Activated CD4-positive, alpha-beta T cell treated with anti-CD3 and anti-CD28 coated beads, Interleukin-2, amount 10 ng/mL, durations not matched to agents 7 days and 5 days (primary cell): ENCODE measurements at regions of chr17 and their contacts with region 1.

Region 1: DNA sequence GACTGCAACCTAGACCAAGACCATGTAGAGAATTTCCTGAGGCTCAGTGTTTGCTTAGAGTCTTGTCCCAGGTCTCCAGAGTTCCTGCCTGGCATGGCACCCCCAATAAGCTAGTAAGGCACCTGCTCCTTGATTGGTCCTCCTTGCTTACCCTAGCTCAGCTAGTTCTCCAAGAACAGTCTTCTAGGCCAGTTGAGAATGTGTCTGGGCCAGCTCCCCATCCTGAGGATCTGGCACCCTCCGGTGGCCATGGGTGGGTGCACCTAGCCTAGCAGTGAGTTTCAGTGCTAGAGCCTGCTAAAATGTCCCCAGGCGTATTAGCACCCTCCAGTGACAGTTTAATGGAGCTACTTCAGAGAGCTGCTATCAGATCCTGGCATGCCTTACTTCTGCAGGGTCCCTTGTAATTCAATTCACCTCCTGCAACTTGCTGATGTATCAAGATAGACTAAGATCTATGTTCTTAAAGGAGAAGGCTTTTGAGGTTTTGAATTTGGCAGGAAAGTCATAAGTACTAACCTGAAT is 44.4 kb upstream of the MED13 start:
- DNase-seq: peak; percentile 70
- H3K4me3 Mint-ChIP-seq: no peak overlapping the region
- H3K27ac Mint-ChIP-seq: no peak overlapping the region
- H3K4me1 Mint-ChIP-seq: no peaks in the 10 kb centered on the region
- H3K27me3 Mint-ChIP-seq: peaks cover 14% of the 10 kb centered on the region

Region 2: GRCh38 chr17:62098623-62099231 is 10.7 kb before region 1 on chr17:
- CTCF ChIA-PET with region 1: interaction called, 28 read pairs
- POLR2A ChIA-PET with region 1: no interaction called
- DNase-seq: no peak
- H3K4me3 Mint-ChIP-seq: no peak overlapping the region
- H3K27ac Mint-ChIP-seq: no peak overlapping the region
- H3K4me1 Mint-ChIP-seq: peaks cover 11% of the 10 kb centered on the region
- H3K27me3 Mint-ChIP-seq: peaks cover 2% of the 10 kb centered on the region